ENCODE measurements at regions of chr16 and their contacts with region 1.

Region 1: DNA sequence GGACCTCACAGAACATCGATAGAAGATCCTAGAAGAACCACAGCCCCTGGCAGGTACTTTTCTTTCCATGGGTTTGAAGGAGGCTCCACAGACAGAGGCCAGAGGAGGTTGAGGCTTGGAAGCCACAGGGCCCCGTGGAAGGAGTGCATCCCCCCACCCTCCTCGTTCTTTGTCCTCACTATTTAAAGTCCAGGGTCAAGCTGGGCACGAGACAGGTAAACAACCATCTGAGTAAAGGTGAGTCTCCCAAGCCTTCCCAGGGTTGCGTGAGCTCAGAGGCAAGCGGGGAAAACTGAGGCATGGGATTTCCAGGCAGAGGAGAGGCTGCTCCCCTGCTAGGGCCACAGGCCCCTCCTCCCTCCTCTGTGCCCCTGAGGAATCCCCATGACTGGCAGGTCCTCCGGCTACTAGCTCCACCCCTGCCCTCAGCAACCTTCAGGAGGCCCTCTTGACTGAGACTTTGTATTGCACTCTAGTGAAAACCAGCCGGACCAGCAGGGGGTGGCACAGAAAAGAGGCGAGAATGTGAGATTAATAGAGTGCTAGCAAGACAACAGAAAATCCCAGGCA is 927 bp upstream of the SULT1A2 start:
- DNase-seq: peak; percentile 91
- ATAC-seq: peak; percentile 61
- H3K4me3 ChIP-seq: peak overlapping the region; percentile 66 to 80 (median 69)
- H3K27ac ChIP-seq: peak overlapping the region; percentile 81
- H3K4me1 ChIP-seq: peaks cover 55% of the 10 kb centered on the region
- H3K27me3 ChIP-seq: no peaks in the 10 kb centered on the region
- CTCF ChIP-seq: peak; percentile 77
- EP300 ChIP-seq: 0 out of 4 replicates have a peak, but pooled peaks of 1 of the 2 experiments have one; percentile 17
- POLR2A ChIP-seq: peak; percentile 40 to 67; a peak in 2 of 4 replicates
- RAD21 ChIP-seq: peak; percentile 52

Region 2: GRCh38 chr16:28609631-28610594 is 12.1 kb after region 1 on chr16 and contains the start of gene SULT1A1:
- CTCF ChIA-PET with region 1: no interaction called
- POLR2A ChIA-PET with region 1: interaction called, 175 read pairs
- in situ Hi-C with region 1: no loop called
- intact Hi-C with region 1: no loop called
- DNase-seq: peak; percentile 93
- ATAC-seq: peak; percentile 71
- H3K4me3 ChIP-seq: peak within 1 kb of the TSS; percentile 66 to 90 (median 70)
- H3K27ac ChIP-seq: peak within 1 kb of the TSS; percentile 75
- H3K4me1 ChIP-seq: peaks cover 39% of the 10 kb centered on the region
- H3K27me3 ChIP-seq: no peaks in the 10 kb centered on the region
- CTCF ChIP-seq: no peak
- EP300 ChIP-seq: no peak; a peak in 1 of 4 replicates
- POLR2A ChIP-seq: peak; percentile 74 to 99
- RAD21 ChIP-seq: peak; percentile 21; the same call in 1 of the 2 replicates
- total RNA-seq, gene SULT1A1: 147 and 174 TPM in 2 replicates

Region 3: DNA sequence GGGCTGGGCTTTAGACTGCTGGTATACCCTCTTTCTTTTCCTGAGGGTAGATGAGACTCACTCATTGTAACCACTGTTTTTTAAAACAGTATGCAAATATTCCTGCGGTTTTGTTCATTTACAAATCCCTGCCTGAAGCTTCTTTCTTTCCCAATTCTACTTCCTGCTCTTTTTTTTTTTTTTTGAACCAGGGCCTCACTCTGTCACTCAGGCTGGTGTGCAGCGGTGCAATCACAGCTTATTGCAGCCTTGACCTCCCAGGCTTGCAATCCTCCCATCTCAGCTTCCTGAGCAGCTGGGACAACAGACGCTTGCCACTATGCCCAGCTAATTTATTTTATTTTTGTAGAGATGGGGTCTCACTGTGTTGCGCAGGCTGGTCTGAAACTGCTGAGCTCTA is 20.1 kb after region 1 on chr16:
- CTCF ChIA-PET with region 1: interaction called, 5 read pairs
- POLR2A ChIA-PET with region 1: interaction called, 20 read pairs
- in situ Hi-C with region 1: no loop called
- intact Hi-C with region 1: no loop called
- DNase-seq: peak; percentile 82
- ATAC-seq: peak; percentile 49
- H3K4me3 ChIP-seq: peak overlapping the region in 1 of 3 experiments; percentile 42; a peak in 2 of 6 replicates
- H3K27ac ChIP-seq: no peak overlapping the region
- H3K4me1 ChIP-seq: peaks cover 51% of the 10 kb centered on the region
- H3K27me3 ChIP-seq: no peaks in the 10 kb centered on the region; a peak in 1 of 5 replicates
- CTCF ChIP-seq: no peak
- EP300 ChIP-seq: peak in 1 of 2 experiments; percentile 61; a peak in 2 of 4 replicates
- POLR2A ChIP-seq: no peak
- RAD21 ChIP-seq: no peak

Region 4: GRCh38 chr16:28984619-28985135 is 386.9 kb after region 1 on chr16 and contains the start of gene LAT:
- CTCF ChIA-PET with region 1: no interaction called
- POLR2A ChIA-PET with region 1: no interaction called
- in situ Hi-C with region 1: no loop called
- intact Hi-C with region 1: no loop called
- DNase-seq: no peak
- ATAC-seq: peak; percentile 9; the same call in 2 of the 3 replicates
- H3K4me3 ChIP-seq: no peak within 1 kb of the TSS
- H3K27ac ChIP-seq: no peak within 1 kb of the TSS
- H3K4me1 ChIP-seq: no peaks in the 10 kb centered on the region
- H3K27me3 ChIP-seq: no peaks in the 10 kb centered on the region
- CTCF ChIP-seq: no peak
- EP300 ChIP-seq: no peak
- POLR2A ChIP-seq: no peak
- RAD21 ChIP-seq: no peak
- total RNA-seq, gene LAT: 0.28 and 2.0 TPM in 2 replicates